WTC11 (cell line): ENCODE measurements at regions of chr7 and their contacts with region 1.

Region 1: DNA sequence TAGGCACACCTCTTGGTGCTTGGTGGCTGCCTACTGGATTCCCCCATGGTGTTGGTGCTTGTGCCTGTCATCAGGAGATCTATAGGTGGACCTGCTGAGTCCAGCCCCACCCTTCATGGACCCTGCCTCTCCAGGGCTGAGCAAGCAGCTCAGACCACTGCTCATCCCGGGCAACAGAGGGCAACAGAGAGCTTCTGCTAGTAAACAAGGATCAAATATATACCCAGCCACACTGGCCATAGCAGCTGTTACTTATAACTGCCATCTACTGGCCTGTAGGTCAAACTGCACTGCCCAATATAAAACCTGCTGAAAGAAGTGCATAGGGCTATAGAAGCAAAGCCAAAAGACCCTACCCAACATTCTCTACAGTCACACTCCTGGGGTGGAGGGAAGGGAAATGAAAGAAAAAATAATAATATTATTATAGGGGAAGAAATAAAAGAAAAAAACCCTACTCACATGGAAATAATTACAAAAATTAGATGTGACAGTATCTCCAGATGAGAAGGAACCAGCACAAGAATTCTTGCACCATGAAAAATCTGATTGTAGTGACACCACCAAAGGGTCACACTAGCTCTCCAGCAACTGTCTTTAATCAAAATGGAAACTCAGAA is 54.9 kb upstream of the ZNF800 start:
- DNase-seq: peak; percentile 68
- ATAC-seq: peak; percentile 100
- H3K4me3 Mint-ChIP-seq: no peak overlapping the region
- H3K27ac Mint-ChIP-seq: no peak overlapping the region
- H3K4me1 Mint-ChIP-seq: no peaks in the 10 kb centered on the region
- H3K27me3 Mint-ChIP-seq: peaks cover 44% of the 10 kb centered on the region
- CTCF ChIP-seq: peak; percentile 72

Region 2: GRCh38 chr7:127347567-127348246 is 99.7 kb before region 1 on chr7:
- CTCF ChIA-PET with region 1: interaction called, 13 read pairs
- POLR2A ChIA-PET with region 1: no interaction called
- DNase-seq: peak; percentile 77
- ATAC-seq: peak; percentile 99
- H3K4me3 Mint-ChIP-seq: peak overlapping the region; percentile 55
- H3K27ac Mint-ChIP-seq: no peak overlapping the region
- H3K4me1 Mint-ChIP-seq: peaks cover 7% of the 10 kb centered on the region
- H3K27me3 Mint-ChIP-seq: peaks cover 78% of the 10 kb centered on the region
- CTCF ChIP-seq: peak; percentile 47

Region 3: DNA sequence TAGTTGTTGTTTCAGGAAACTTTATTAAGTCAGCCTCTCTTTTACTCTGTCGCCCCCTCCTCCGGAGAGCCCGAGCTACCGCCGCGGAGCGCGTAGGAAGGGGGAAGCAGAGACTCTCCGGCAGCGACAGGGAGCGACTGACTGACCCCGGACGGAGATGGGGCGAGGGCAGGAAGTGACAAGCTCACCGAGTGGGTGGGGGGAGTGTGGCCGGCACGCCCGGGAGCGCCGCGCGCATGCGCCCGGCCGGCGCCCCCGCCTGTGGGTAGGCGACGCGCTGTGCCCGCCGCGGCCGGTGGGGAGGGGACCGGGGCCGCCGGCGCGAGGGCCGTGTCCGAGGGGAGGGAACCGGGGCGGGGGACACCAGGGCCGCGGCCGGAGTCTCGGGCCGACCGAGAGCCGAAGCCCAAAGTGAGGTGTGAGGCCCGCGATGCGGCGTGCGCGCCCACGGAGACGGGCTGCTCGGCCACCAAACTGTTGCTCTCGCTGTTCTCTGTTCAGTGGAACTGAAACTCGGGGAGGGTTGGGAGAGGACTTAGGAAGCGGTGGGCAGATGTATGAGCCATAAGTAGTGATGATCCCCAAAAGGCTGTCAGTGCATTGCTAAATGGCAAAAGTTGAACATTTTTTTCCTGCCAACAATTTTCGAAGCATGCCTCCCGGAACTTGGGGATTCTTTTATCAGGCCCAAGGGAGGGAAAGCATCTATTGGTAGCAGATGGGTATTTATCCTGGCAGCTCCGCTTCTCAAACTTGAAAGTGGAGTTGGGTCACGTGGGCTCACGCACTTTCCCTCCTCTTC is 54.7 kb before region 1 on chr7 and contains the start of gene ZNF800:
- CTCF ChIA-PET with region 1: interaction called, 13 read pairs
- POLR2A ChIA-PET with region 1: no interaction called
- DNase-seq: peak; percentile 73
- ATAC-seq: peak; percentile 87
- H3K4me3 Mint-ChIP-seq: peak within 1 kb of the TSS; percentile 96
- H3K27ac Mint-ChIP-seq: no peak within 1 kb of the TSS
- H3K4me1 Mint-ChIP-seq: peaks cover 12% of the 10 kb centered on the region
- H3K27me3 Mint-ChIP-seq: peaks cover 62% of the 10 kb centered on the region
- CTCF ChIP-seq: no peak
- total RNA-seq, gene ZNF800: 5.7 to 7.0 TPM (median 6.2 TPM) in 3 replicates

Region 4: DNA sequence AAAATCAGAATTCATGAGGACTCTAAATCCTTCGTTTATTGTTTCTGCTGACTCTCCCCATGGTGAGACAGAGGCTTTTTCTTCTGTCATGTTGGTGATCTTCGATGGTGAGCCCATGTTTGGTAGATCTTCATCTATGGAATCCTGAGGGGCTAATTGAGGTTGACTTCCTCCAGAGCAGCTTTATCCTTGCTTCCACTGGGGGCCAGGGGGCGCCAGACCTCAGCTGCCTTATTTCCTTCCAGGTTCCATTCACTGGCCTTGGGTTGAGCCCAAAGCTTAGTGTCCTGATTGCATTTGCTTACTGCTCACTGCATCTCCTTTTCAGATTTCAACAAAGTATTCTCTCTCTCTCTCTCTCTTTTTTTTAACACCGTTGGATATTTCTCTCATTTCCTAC is 57.3 kb after region 1 on chr7:
- CTCF ChIA-PET with region 1: interaction called, 14 read pairs
- POLR2A ChIA-PET with region 1: no interaction called
- DNase-seq: peak; percentile 73
- ATAC-seq: peak; percentile 96
- H3K4me3 Mint-ChIP-seq: no peak overlapping the region
- H3K27ac Mint-ChIP-seq: no peak overlapping the region
- H3K4me1 Mint-ChIP-seq: no peaks in the 10 kb centered on the region
- H3K27me3 Mint-ChIP-seq: peaks cover 55% of the 10 kb centered on the region
- CTCF ChIP-seq: peak; percentile 65

Region 5: DNA sequence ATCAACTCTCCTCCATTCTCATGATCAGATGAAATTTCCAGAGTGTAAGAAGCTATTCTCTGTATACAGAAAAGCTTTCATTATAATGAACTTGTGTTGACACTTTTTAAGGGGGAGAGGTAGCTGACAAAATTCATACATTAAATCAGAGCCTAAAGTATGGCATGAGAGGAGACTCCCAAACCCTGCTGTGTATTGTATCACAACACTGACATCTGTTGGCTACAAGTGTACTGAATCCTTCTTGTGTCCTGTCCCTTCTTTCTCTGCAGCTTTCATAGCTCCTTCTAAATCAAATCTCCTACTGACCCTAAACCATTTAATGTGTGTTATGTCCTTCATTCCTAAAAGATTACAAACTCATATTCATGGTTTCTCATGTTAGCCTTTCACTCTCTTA is 67.1 kb after region 1 on chr7:
- CTCF ChIA-PET with region 1: interaction called, 11 read pairs
- POLR2A ChIA-PET with region 1: no interaction called
- DNase-seq: no peak
- ATAC-seq: peak; percentile 82
- H3K4me3 Mint-ChIP-seq: no peak overlapping the region
- H3K27ac Mint-ChIP-seq: no peak overlapping the region
- H3K4me1 Mint-ChIP-seq: no peaks in the 10 kb centered on the region
- H3K27me3 Mint-ChIP-seq: peaks cover 92% of the 10 kb centered on the region
- CTCF ChIP-seq: no peak